ENCODE measurements at regions of chr10 and their contacts with region 1.

Region 1: DNA sequence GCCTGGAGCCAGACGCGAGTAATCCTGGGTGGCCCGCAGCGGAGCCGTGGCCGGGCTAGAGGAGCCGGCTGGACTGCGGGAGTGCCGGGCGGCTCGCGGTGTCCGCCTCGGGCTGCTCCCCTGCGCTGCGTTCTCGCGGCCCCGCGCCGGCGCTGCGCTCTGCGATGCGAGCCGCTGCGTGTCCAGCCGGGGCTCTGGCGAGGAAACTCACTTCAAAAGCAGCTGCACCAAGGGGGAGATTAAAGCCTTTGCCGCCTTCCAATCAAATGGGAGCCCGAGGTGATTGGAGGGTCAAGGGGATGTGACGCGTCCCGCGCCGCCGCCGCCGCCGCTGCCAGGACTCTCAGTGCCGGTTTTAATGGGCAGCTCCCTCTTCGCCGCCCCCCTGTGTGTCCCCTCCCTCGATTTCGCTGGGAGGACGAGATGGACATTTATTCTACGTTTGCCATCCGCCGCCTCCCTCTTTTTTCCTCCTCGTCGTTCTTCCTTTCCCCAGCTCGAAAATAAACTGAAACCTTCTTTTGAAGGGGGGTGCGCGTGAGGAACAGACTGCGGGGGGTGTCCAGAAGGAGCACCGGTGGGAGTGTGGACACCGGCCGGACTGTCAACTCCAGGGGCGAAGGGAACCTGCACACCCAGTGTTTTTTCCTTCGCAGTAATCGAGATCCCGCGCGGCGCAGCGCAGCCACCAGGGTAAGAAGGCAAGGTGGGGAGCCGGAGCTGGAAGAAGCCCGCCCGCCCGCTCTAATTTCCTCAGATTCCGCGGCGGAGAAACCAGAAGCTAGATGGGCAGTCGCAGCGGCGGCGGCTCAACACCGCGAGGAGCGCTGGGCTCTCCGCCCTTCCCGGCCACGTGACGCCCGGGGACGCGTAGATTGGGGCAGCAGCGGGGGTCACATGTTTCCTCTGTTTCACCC is at the start of gene ZNF503:
- DNase-seq: peak; percentile 97
- total RNA-seq, gene ZNF503: 3.3 TPM

Region 2: DNA sequence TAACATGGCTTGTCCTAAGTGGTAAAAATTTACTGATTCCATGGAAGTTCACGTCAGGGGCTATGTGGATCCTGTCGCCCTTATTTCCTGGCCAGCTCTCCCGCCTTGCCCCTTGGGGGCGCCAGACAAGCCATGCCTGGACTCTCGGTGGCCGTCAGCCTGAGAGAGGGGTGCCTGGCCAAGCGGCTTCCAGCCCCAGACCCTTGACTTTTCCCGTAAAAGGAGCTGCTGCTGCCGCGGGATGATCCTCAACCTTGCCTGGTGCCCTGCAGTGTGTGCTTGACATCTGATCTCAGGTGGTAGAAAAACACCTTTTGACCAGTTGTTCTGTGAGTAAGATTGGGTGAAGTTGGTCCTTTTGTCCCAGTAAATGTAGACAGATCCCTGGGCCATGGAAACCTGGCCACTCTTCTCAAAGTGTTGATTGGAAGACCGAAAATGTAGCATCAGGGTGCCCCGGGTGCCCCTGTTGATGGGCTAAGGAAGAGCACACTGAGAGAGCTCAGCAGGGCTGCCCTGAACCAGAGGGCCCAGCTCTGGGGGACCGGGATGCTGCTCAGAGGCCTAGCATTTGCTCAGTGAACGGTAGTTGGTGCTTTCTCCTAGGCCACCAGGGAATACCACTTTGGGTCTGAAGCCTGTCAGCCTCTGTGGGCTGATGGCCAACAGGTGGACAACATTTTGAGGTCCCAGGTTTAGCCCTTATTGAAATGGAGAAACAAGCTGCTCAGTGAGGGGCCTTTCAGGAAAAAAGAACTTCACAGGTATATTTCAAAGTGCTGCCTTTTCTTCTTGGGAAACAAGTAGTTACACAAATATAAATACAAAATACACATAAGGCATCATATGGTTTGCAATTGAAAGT is 192.1 kb after region 1 on chr10:
- intact Hi-C with region 1: loop called (anchors 10 kb)
- DNase-seq: no peak

Region 3: DNA sequence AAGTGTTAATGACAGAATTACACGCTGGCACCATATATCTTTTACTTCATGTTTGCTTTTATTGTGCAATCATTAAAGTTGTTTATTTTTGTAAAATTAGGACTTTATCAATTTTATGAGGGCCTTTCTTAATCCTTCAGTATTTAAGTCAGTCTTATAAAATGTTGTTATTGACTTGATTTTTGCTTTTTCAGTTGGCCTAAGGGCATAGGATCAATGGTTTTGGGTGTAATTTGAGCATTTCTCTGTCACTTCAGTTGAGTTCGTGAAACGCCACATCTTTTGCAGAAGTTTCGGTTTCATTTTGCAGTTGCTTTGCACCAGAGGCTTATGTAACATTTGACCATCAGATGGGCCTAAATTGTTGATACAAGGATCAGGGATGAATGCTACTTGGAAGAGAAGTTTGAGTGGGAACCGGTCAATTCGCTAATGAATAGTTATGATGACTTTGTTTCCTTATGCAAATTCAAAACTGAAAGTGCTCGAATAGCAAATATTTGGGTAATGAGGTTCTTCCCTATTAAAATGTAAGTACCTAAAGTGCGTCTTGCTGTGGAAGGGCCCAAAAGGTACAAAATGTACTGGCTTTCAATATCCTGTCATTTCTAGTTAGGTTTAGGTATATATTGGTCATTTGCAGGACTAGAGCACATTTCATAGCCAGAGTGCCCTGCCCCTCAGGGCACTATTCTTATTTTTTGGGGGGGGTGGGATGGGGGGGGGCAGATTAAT is 370.5 kb after region 1 on chr10:
- intact Hi-C with region 1: loop called (anchors 10 kb)
- DNase-seq: no peak

Region 4: GRCh38 chr10:75887992-75888680 is 486.3 kb after region 1 on chr10:
- intact Hi-C with region 1: no loop called
- DNase-seq: no peak

Region 5: GRCh38 chr10:75926763-75927162 is 524.9 kb after region 1 on chr10:
- intact Hi-C with region 1: loop called (anchors 5 kb)
- DNase-seq: no peak

Region 6: GRCh38 chr10:76303682-76304316 is 902.0 kb after region 1 on chr10:
- intact Hi-C with region 1: loop called (anchors 5 kb)
- DNase-seq: peak; percentile 77

Measured in cardiac septum (tissue), 1 donor.